ENCODE measurements at regions of chr1 and their contacts with region 1.

Region 1: GRCh38 chr1:167491586-167492461 is 26.5 kb downstream of the CD247 start:
- DNase-seq: peak; percentile 52 to 78
- ATAC-seq: peak; percentile 34 to 68 (median 54)
- H3K4me3 ChIP-seq: no peak overlapping the region
- H3K4me3 Mint-ChIP-seq: peak overlapping the region; percentile 87
- H3K27ac ChIP-seq: peak overlapping the region; percentile 97
- H3K27ac Mint-ChIP-seq: peak overlapping the region; percentile 91 to 100
- H3K4me1 ChIP-seq: peaks cover 96% of the 10 kb centered on the region
- H3K4me1 Mint-ChIP-seq: peaks cover 95 to 99% of the 10 kb centered on the region in 2 donors
- H3K27me3 ChIP-seq: no peaks in the 10 kb centered on the region
- H3K27me3 Mint-ChIP-seq: no peaks in the 10 kb centered on the region
- CTCF ChIP-seq: no peak

Region 2: DNA sequence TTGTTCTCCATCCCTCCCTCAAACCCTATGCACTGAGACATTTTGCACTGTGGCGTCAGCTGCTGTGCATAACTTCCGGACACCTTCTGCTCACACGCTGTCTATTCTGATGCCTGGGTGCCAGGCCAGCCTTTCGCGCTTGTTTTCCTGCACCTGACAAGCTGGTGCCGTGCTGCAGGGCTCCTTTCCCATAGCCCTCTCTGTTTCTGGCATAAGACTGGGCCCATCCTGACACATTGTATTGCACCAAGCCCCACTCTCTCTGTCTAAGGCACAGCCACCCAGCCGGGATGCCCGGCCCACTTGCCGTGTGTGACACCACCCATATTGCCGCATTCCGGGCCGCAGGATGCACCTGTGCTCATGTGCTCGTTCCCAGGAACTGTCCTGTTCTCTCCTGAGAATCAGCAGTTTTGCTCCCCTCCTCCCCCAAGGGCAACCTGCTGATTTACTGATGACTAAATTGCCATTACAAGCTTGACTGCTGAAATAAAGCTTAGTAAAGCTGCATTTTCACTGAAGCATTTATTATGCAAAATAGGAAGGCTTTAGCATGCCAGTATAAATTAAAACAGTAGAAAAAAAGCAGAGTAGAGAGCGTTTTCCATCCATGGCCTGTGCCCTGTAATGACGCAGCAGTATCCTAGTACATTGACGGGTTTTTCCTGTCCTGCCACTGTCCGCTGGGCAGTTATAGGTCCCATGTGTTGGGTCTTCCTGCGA is 61.5 kb before region 1 on chr1:
- intact Hi-C with region 1: loop called (anchors 1 kb)
- DNase-seq: peak; percentile 52 to 58
- ATAC-seq: peak; percentile 20 to 50 (median 21)
- H3K4me3 ChIP-seq: no peak overlapping the region
- H3K4me3 Mint-ChIP-seq: peak overlapping the region; percentile 85
- H3K27ac ChIP-seq: peak overlapping the region; percentile 98
- H3K27ac Mint-ChIP-seq: peak overlapping the region; percentile 91 to 100
- H3K4me1 ChIP-seq: peaks cover 82% of the 10 kb centered on the region
- H3K4me1 Mint-ChIP-seq: peaks cover 87 to 89% of the 10 kb centered on the region in 2 donors
- H3K27me3 ChIP-seq: no peaks in the 10 kb centered on the region
- H3K27me3 Mint-ChIP-seq: no peaks in the 10 kb centered on the region
- CTCF ChIP-seq: no peak

Region 3: GRCh38 chr1:167447521-167448136 is 44.2 kb before region 1 on chr1:
- intact Hi-C with region 1: loop called (anchors 1 kb)
- DNase-seq: peak in 1 of 2 donors; percentile 86
- ATAC-seq: peak; percentile 39 to 74 (median 54)
- H3K4me3 ChIP-seq: peak overlapping the region; percentile 9
- H3K4me3 Mint-ChIP-seq: peak overlapping the region; percentile 88
- H3K27ac ChIP-seq: peak overlapping the region; percentile 93
- H3K27ac Mint-ChIP-seq: peak overlapping the region; percentile 91 to 100
- H3K4me1 ChIP-seq: peaks cover 96% of the 10 kb centered on the region
- H3K4me1 Mint-ChIP-seq: peaks cover 88% of the 10 kb centered on the region in 2 donors
- H3K27me3 ChIP-seq: no peaks in the 10 kb centered on the region
- H3K27me3 Mint-ChIP-seq: no peaks in the 10 kb centered on the region
- CTCF ChIP-seq: no peak

Region 4: DNA sequence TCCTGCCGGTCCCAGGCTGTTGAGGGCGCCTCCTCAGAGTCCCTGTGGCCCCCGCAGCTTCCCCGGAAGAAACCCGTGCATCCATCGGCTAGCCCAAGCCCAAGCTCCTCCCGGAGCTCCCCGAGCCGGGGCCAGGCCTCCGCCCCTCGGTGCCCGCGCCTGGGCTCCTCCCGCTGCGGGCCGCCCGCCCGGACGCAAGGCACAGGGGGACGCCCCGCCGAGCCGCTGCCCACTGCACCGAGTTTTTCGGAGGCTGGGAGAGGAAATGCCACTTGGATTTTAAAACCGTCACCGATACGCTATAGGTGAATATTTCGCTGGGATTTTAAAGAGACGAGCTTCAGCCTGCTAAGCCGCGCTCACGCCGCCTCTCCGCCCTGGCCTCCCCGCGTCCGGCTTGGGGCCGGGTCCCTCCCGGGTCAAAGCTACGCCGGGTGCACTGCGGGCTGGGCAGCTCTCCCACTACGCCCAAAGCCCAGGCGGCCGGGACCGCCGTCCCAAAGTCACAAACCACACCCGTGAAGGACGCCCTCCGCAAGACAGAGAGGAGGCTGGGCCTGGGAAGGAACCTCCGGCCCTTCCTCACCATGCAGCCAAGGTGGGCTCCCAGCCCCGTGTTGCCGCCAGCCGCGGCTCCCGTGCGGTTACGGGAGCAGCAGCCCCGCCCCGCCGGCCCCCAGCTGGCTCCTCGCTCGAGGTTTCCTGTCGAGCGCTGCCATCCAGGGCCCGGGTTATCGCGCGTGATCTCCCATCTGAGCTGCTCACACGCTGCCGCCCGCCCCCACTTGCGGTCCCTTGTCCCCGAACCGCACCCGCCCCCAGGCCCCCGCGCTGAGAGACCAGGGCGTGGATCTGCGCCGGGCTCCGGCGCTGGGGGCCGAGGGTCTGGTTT is 36.7 kb before region 1 on chr1:
- intact Hi-C with region 1: loop called (anchors 2 kb)
- DNase-seq: peak; percentile 75 to 92
- ATAC-seq: peak; percentile 30 to 69 (median 61)
- H3K4me3 ChIP-seq: peak overlapping the region; percentile 69
- H3K4me3 Mint-ChIP-seq: peak overlapping the region; percentile 91
- H3K27ac ChIP-seq: peak overlapping the region; percentile 98
- H3K27ac Mint-ChIP-seq: peak overlapping the region; percentile 91 to 100
- H3K4me1 ChIP-seq: peaks cover 77% of the 10 kb centered on the region
- H3K4me1 Mint-ChIP-seq: peaks cover 72 to 74% of the 10 kb centered on the region in 2 donors
- H3K27me3 ChIP-seq: no peaks in the 10 kb centered on the region
- H3K27me3 Mint-ChIP-seq: no peaks in the 10 kb centered on the region
- CTCF ChIP-seq: no peak

Region 5: DNA sequence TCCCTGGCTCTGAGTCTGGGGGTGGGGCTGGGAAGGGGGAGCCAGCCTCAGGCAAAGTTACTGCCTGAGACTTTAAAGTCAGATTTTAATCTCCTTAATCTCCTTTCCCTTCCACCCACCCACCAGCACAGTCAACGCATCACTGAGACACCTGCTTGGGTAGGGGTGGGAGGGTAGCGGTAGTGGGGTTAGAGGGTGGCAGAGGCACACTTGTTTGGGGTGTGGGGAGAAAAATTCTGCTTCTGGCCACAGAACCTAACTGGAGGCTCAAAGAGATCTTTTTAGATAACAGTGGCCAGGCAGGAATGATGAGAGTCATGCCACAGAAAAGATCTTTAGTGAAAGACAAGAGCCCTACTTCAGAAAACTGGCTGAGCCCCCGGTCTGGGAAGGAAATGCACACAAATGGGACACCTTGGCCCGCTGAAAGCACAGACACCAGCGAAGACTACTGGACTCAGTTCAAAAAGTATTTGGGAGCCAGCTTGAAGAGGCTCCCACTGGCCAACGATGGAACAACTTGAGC is 17.6 kb before region 1 on chr1:
- intact Hi-C with region 1: loop called (anchors 2 kb)
- DNase-seq: peak in 1 of 2 donors; percentile 74
- ATAC-seq: peak; percentile 38 to 52 (median 40)
- H3K4me3 ChIP-seq: peak overlapping the region; percentile 6
- H3K4me3 Mint-ChIP-seq: peak overlapping the region; percentile 86
- H3K27ac ChIP-seq: peak overlapping the region; percentile 87
- H3K27ac Mint-ChIP-seq: peak overlapping the region; percentile 91 to 100
- H3K4me1 ChIP-seq: peaks cover 70% of the 10 kb centered on the region
- H3K4me1 Mint-ChIP-seq: peaks cover 91% of the 10 kb centered on the region in 2 donors
- H3K27me3 ChIP-seq: no peaks in the 10 kb centered on the region
- H3K27me3 Mint-ChIP-seq: no peaks in the 10 kb centered on the region
- CTCF ChIP-seq: no peak

Region 6: GRCh38 chr1:168032029-168032428 is 540.2 kb after region 1 on chr1:
- intact Hi-C with region 1: no loop called
- DNase-seq: no peak
- ATAC-seq: no peak
- H3K4me3 ChIP-seq: no peak overlapping the region
- H3K4me3 Mint-ChIP-seq: no peak overlapping the region
- H3K27ac ChIP-seq: no peak overlapping the region
- H3K27ac Mint-ChIP-seq: no peak overlapping the region
- H3K4me1 ChIP-seq: no peaks in the 10 kb centered on the region
- H3K4me1 Mint-ChIP-seq: no peaks in the 10 kb centered on the region
- H3K27me3 ChIP-seq: no peaks in the 10 kb centered on the region
- H3K27me3 Mint-ChIP-seq: no peaks in the 10 kb centered on the region
- CTCF ChIP-seq: no peak

Measured in natural killer cell (primary cell).